Gastrocnemius medialis (tissue), 4 donors: ENCODE measurements at regions of chrX and their contacts with region 1.

Region 1: GRCh38 chrX:40647307-40648197 is at the start of gene CXorf38:
- DNase-seq: peak; percentile 72 to 89
- ATAC-seq: peak; percentile 81 to 86
- H3K4me3 ChIP-seq: peak within 1 kb of the TSS; percentile 67 to 75 (median 73)
- H3K27ac ChIP-seq: peak within 1 kb of the TSS; percentile 79 to 91 (median 84)
- H3K4me1 ChIP-seq: peaks cover 14 to 17% of the 10 kb centered on the region in 2 donors
- H3K27me3 ChIP-seq: no peaks in the 10 kb centered on the region
- CTCF ChIP-seq: no peak
- POLR2A ChIP-seq: peak; percentile 63 to 68
- total RNA-seq, gene CXorf38: 4.1 to 8.7 (median 5.8) TPM

Region 2: GRCh38 chrX:40244980-40245379 is 402.6 kb before region 1 on chrX:
- in situ Hi-C with region 1: no loop called
- intact Hi-C with region 1: no loop called
- DNase-seq: no peak
- ATAC-seq: no peak
- H3K4me3 ChIP-seq: no peak overlapping the region
- H3K27ac ChIP-seq: no peak overlapping the region
- H3K4me1 ChIP-seq: no peaks in the 10 kb centered on the region
- H3K27me3 ChIP-seq: no peaks in the 10 kb centered on the region
- CTCF ChIP-seq: no peak
- POLR2A ChIP-seq: no peak

Region 3: DNA sequence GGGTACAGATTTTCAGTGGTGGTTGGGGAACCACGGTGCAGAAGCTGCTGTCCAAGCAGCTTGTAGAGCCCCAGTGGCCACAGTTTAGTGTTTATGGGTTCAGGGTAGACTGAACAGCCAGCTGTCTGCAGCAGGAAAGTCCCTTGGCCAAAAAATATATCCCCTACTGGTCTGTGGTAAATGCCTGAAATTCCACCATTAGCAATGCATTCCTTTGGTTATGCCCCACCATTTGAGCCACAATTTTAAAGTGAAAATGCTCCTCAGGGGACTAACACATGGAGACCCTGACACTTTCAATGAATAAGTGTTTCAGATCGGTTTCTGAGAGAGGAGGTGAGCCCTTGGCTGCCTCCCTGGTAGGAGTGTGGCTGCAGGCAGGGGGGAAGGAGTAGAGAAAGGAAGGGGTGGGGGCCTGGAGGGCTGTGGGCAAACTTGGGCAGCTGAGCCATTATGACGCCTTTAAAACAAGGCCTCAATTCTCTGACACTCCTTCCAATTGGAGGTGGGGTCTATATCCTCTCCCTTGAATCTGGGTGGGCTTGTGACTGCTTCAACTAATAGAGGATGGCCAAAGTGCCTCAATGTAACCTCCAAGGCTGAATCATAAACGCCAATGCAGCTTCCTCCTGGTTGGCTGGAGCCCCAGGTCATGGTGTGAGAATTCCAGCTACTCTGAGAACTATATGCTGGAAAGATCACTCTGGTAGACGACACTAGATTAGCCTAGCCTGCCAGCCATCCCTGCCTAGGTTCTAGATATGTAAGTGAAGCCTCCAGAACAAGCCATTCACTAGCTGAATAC is 142.5 kb before region 1 on chrX:
- in situ Hi-C with region 1: no loop called
- intact Hi-C with region 1: no loop called
- DNase-seq: no peak
- ATAC-seq: no peak
- H3K4me3 ChIP-seq: no peak overlapping the region
- H3K27ac ChIP-seq: no peak overlapping the region
- H3K4me1 ChIP-seq: no peaks in the 10 kb centered on the region
- H3K27me3 ChIP-seq: no peaks in the 10 kb centered on the region
- CTCF ChIP-seq: no peak
- POLR2A ChIP-seq: no peak

Region 4: DNA sequence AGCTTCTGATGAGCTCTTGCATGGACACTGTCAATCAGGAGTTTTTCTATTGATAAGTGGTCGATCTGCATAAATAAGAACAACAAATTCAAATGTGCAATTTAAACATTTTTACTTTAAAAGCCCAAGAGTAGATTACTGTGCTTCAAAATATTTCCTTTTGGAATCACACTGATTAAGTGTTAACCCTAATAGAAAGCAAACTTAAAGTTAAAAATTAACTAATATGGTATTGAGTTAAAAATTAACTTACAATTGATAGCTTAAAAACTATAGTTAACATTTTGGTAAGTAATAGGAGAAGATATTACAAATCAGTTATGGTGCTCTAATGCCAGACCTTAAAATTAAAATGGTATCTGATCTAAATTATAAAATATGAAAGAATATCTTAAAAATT is 61.8 kb after region 1 on chrX:
- in situ Hi-C with region 1: no loop called
- intact Hi-C with region 1: no loop called
- DNase-seq: no peak
- ATAC-seq: no peak
- H3K4me3 ChIP-seq: no peak overlapping the region
- H3K27ac ChIP-seq: peak overlapping the region in 1 of 4 donors; percentile 25
- H3K4me1 ChIP-seq: peaks cover 14 to 17% of the 10 kb centered on the region in 2 donors
- H3K27me3 ChIP-seq: no peaks in the 10 kb centered on the region
- CTCF ChIP-seq: no peak
- POLR2A ChIP-seq: no peak

Region 5: GRCh38 chrX:40735325-40736169 is 88.0 kb after region 1 on chrX and contains the start of gene MED14:
- in situ Hi-C with region 1: loop called in 1 of 4 experiments (anchors 10 kb)
- intact Hi-C with region 1: loop called (anchors 1 kb)
- DNase-seq: peak; percentile 71 to 85
- ATAC-seq: peak; percentile 90 to 94
- H3K4me3 ChIP-seq: peak within 1 kb of the TSS; percentile 65 to 90 (median 78)
- H3K27ac ChIP-seq: peak within 1 kb of the TSS; percentile 90 to 98 (median 94)
- H3K4me1 ChIP-seq: peaks cover 28 to 36% of the 10 kb centered on the region in 2 donors
- H3K27me3 ChIP-seq: no peaks in the 10 kb centered on the region
- CTCF ChIP-seq: peak; percentile 42 to 76 (median 66)
- POLR2A ChIP-seq: peak; percentile 77 to 82
- total RNA-seq, gene MED14: 19.8 to 27.0 (median 24.0) TPM

Region 6: GRCh38 chrX:40792433-40792832 is 144.9 kb after region 1 on chrX:
- in situ Hi-C with region 1: loop called in 3 of 4 experiments (anchors 5 to 10 kb)
- intact Hi-C with region 1: loop called (anchors 1 kb)
- DNase-seq: no peak
- ATAC-seq: no peak
- H3K4me3 ChIP-seq: no peak overlapping the region
- H3K27ac ChIP-seq: no peak overlapping the region
- H3K4me1 ChIP-seq: peaks cover 0 to 6% of the 10 kb centered on the region in 2 donors
- H3K27me3 ChIP-seq: no peaks in the 10 kb centered on the region
- CTCF ChIP-seq: no peak
- POLR2A ChIP-seq: no peak

Region 7: DNA sequence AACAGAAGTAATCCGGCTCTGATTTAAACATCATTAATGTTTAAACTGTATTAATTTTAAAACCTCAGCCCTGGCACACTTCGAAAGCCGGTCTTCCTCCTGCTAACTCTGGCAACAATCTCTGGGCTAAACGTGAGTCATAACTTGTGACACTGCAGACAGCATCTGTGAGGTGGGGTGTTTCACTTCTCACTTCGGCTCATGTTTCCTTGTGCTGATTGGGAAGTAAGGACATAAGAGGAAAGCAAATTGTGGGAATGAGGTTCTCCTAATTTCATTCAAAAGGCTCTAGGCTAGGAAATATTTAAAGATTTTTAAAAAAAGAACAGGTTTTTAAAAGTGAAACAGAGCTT is 297.8 kb after region 1 on chrX:
- in situ Hi-C with region 1: no loop called
- intact Hi-C with region 1: loop called (anchors 10 kb)
- DNase-seq: peak; percentile 72 to 80
- ATAC-seq: peak; percentile 98 to 99
- H3K4me3 ChIP-seq: no peak overlapping the region
- H3K27ac ChIP-seq: peak overlapping the region; percentile 77 to 86 (median 81)
- H3K4me1 ChIP-seq: peaks cover 0 to 5% of the 10 kb centered on the region in 2 donors
- H3K27me3 ChIP-seq: no peaks in the 10 kb centered on the region
- CTCF ChIP-seq: no peak
- POLR2A ChIP-seq: peak in 1 of 2 donors; percentile 10

Region 8: GRCh38 chrX:41116948-41117347 is 469.4 kb after region 1 on chrX:
- in situ Hi-C with region 1: loop called in 3 of 4 experiments (anchors 10 to 25 kb)
- intact Hi-C with region 1: loop called (anchors 2 kb)
- DNase-seq: no peak
- ATAC-seq: peak in 1 of 2 donors; percentile 15
- H3K4me3 ChIP-seq: no peak overlapping the region
- H3K27ac ChIP-seq: peak overlapping the region in 1 of 4 donors; percentile 50
- H3K4me1 ChIP-seq: peaks cover 32 to 43% of the 10 kb centered on the region in 2 donors
- H3K27me3 ChIP-seq: no peaks in the 10 kb centered on the region
- CTCF ChIP-seq: no peak
- POLR2A ChIP-seq: no peak

Region 9: DNA sequence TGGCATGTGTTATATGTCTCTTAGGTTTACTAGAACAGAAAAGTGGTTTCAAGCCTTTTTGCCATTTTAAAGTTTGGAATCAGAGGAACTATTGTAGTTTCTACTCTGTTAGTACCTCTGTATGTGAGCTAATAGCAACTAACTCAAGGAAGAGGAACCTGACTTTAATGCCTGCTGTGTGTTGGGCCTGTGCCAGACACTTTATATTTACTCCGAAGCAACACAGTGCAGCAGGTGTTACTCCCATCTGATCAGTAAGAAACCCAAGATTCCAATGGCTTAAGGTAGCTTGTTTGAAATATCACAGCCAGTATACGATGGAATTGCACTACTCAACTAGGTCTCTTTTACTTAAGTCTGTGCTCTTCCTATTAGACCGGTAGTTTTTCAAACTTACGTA is 516.9 kb after region 1 on chrX:
- in situ Hi-C with region 1: no loop called
- intact Hi-C with region 1: no loop called
- DNase-seq: peak in 1 of 2 donors; percentile 14
- ATAC-seq: peak in 1 of 2 donors; percentile 60
- H3K4me3 ChIP-seq: no peak overlapping the region
- H3K27ac ChIP-seq: peak overlapping the region in 3 of 4 donors; percentile 2 to 20 (median 13)
- H3K4me1 ChIP-seq: peaks cover 0 to 2% of the 10 kb centered on the region in 2 donors
- H3K27me3 ChIP-seq: no peaks in the 10 kb centered on the region
- CTCF ChIP-seq: no peak
- POLR2A ChIP-seq: no peak

Region 10: GRCh38 chrX:41259516-41259915 is 612.0 kb after region 1 on chrX:
- in situ Hi-C with region 1: loop called in 1 of 4 experiments (anchors 10 kb)
- intact Hi-C with region 1: loop called (anchors 5 kb)
- DNase-seq: no peak
- ATAC-seq: no peak
- H3K4me3 ChIP-seq: no peak overlapping the region
- H3K27ac ChIP-seq: no peak overlapping the region
- H3K4me1 ChIP-seq: no peaks in the 10 kb centered on the region
- H3K27me3 ChIP-seq: no peaks in the 10 kb centered on the region
- CTCF ChIP-seq: no peak
- POLR2A ChIP-seq: no peak